HEK293 (cell line): ENCODE measurements at regions of chrX and their contacts with region 1.

Region 1: DNA sequence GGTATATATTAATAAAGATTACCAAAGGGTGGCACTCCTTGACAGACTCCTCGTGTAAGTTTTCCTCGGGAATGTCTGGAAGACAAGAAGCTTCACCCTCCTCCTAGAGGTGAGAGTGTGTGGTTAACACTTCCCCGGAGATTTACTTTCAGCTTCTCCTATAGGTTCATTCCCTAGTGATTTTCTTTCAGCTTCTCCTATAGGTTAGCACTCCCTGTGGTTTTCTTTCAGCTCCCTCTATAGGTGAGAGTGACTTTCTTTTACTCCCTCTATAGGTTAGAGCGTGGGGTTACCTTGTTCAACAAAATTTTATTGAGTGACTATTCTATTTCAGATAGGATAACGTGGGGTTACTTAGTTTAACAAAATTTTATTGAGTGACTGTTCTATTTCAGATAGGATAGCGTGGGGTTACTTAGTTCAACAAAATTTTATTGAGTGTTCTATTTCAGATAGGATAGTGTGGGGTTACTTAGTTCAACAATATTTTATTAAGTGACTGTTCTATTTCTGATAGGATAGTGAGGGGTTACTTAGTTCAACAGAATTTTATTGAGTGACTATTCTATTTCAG is 106.0 kb upstream of the PLAC1 start:
- H3K4me3 ChIP-seq: no peak overlapping the region
- H3K27ac ChIP-seq: no peak overlapping the region
- H3K4me1 ChIP-seq: no peaks in the 10 kb centered on the region
- CTCF ChIP-seq: no peak

Region 2: GRCh38 chrX:134484039-134484438 is 280.3 kb before region 1 on chrX:
- CTCF ChIA-PET with region 1: interaction called, 16 read pairs
- POLR2A ChIA-PET with region 1: no interaction called
- H3K4me3 ChIP-seq: no peak overlapping the region
- H3K27ac ChIP-seq: no peak overlapping the region
- H3K4me1 ChIP-seq: no peaks in the 10 kb centered on the region
- CTCF ChIP-seq: peak; percentile 52; the same call in 1 of the 2 replicates

Region 3: GRCh38 chrX:134520860-134521390 is 243.4 kb before region 1 on chrX:
- CTCF ChIA-PET with region 1: interaction called, 11 read pairs
- POLR2A ChIA-PET with region 1: no interaction called
- H3K4me3 ChIP-seq: no peak overlapping the region
- H3K27ac ChIP-seq: no peak overlapping the region
- H3K4me1 ChIP-seq: no peaks in the 10 kb centered on the region
- CTCF ChIP-seq: peak; percentile 58; the same call in 1 of the 2 replicates

Region 4: DNA sequence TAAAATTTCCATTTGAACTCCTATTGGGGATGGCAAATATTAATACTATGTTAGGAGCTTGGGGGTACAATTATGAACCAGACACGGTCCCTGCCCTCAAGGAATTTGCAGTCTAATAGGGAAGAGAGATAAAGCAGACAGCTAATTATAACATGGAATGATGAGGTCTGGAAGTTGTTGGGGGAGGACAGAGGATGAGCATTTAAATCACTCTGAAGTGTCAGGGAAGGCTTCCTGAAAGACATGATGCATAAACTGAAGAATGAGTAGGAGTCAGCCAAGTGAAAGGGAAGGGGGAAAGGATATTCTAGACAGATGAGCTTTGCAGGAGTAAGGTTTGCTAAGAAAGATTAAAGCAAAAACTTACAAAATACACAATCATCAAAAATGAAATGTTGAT is 121.9 kb before region 1 on chrX:
- CTCF ChIA-PET with region 1: no interaction called
- POLR2A ChIA-PET with region 1: no interaction called
- H3K4me3 ChIP-seq: no peak overlapping the region
- H3K27ac ChIP-seq: no peak overlapping the region
- H3K4me1 ChIP-seq: no peaks in the 10 kb centered on the region
- CTCF ChIP-seq: no peak

Region 5: GRCh38 chrX:134743091-134743490 is 21.2 kb before region 1 on chrX:
- CTCF ChIA-PET with region 1: no interaction called
- POLR2A ChIA-PET with region 1: no interaction called
- H3K4me3 ChIP-seq: no peak overlapping the region
- H3K27ac ChIP-seq: no peak overlapping the region
- H3K4me1 ChIP-seq: no peaks in the 10 kb centered on the region
- CTCF ChIP-seq: no peak

Region 6: DNA sequence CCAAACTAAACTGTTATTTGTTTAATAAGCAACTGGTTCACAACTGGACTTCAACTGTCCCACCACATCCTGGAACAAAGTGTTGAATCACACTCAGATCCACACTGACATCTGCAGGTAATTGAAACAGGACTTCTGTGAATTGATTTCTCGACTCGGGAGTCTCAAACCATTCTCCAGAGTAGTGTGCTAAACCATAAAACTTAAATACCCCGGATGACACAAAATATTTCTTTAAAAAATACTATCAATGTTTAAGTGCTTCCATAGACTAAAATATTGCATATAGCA is 10.6 kb before region 1 on chrX:
- CTCF ChIA-PET with region 1: interaction called, 23 read pairs
- POLR2A ChIA-PET with region 1: interaction called, 3 read pairs
- H3K4me3 ChIP-seq: no peak overlapping the region
- H3K27ac ChIP-seq: no peak overlapping the region
- H3K4me1 ChIP-seq: 0 out of 2 replicates have a peak, but pooled peaks cover 3% of the 10 kb centered on the region
- CTCF ChIP-seq: peak; percentile 43; the same call in 1 of the 2 replicates

Region 7: DNA sequence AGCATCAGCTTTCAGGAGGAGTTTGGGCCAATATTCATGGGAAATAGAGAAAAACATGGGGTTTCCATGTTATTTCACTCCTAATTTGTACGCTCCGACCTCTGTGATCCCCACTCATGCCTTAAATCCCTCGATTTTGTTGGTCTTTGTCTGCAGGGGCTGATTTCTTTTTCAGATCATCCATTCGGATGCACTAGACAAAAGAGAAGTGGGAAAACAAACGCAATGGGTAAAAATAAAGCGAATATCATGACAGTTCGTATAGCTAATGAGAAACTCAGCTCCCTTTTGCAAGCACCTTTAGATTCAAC is 33.0 kb after region 1 on chrX:
- CTCF ChIA-PET with region 1: no interaction called
- POLR2A ChIA-PET with region 1: no interaction called
- H3K4me3 ChIP-seq: peak overlapping the region; percentile 74
- H3K27ac ChIP-seq: peak overlapping the region; percentile 86
- H3K4me1 ChIP-seq: peaks cover 6% of the 10 kb centered on the region
- CTCF ChIP-seq: no peak